ENCODE measurements at regions of chr4 and their contacts with region 1.

Region 1: DNA sequence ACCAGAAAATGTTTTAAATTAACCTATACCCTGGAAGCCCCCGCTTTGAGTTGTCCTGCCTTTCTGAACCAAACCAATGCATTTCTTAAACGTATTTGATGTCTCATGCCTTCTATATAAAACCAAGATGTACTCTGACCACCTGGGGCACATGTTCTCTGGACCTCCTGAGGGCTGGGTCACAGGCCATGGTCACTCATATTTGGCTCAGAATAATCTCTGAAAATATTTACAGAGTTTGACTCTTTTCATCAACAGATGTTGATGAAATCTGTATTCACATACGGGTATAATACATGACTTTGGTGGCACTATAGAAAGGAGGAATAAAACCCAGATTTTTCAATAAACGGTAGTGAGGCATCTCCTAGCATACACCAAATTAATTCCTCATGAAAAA is 55.7 kb downstream of the STAP1 start:
- DNase-seq: no peak
- H3K4me3 ChIP-seq: no peak overlapping the region
- H3K27ac ChIP-seq: no peak overlapping the region
- H3K4me1 ChIP-seq: no peaks in the 10 kb centered on the region
- H3K27me3 ChIP-seq: no peaks in the 10 kb centered on the region
- CTCF ChIP-seq: no peak

Region 2: GRCh38 chr4:67651536-67651935 is 37.4 kb after region 1 on chr4:
- CTCF ChIA-PET with region 1: no interaction called
- dilution Hi-C with region 1: loop called (anchors 5 kb)
- in situ Hi-C with region 1: no loop called
- intact Hi-C with region 1: no loop called
- DNase-seq: no peak
- H3K4me3 ChIP-seq: no peak overlapping the region
- H3K27ac ChIP-seq: no peak overlapping the region
- H3K4me1 ChIP-seq: no peaks in the 10 kb centered on the region
- H3K27me3 ChIP-seq: no peaks in the 10 kb centered on the region
- CTCF ChIP-seq: no peak

Measured in mammary epithelial cell (primary cell).